Activated CD4-positive, alpha-beta memory T cell treated with anti-CD3 and anti-CD28 coated beads, Interleukin-2, amount 10 ng/mL, durations not matched to agents 7 days and 5 days (primary cell): ENCODE measurements at regions of chr12 and their contacts with region 1.

Region 1: GRCh38 chr12:69239352-69239921 is at the start of gene CPSF6:
- DNase-seq: peak; percentile 97
- H3K4me3 Mint-ChIP-seq: peak within 1 kb of the TSS; percentile 100
- H3K27ac Mint-ChIP-seq: peak within 1 kb of the TSS; percentile 98
- H3K4me1 Mint-ChIP-seq: peaks cover 45% of the 10 kb centered on the region
- H3K27me3 Mint-ChIP-seq: no peaks in the 10 kb centered on the region
- total RNA-seq, gene CPSF6: 89.9 to 91.6 TPM

Region 2: GRCh38 chr12:69083689-69084088 is 155.7 kb before region 1 on chr12:
- CTCF ChIA-PET with region 1: no interaction called
- POLR2A ChIA-PET with region 1: no interaction called
- DNase-seq: no peak
- H3K4me3 Mint-ChIP-seq: no peak overlapping the region
- H3K27ac Mint-ChIP-seq: no peak overlapping the region
- H3K4me1 Mint-ChIP-seq: no peaks in the 10 kb centered on the region
- H3K27me3 Mint-ChIP-seq: peaks cover 20% of the 10 kb centered on the region

Region 3: DNA sequence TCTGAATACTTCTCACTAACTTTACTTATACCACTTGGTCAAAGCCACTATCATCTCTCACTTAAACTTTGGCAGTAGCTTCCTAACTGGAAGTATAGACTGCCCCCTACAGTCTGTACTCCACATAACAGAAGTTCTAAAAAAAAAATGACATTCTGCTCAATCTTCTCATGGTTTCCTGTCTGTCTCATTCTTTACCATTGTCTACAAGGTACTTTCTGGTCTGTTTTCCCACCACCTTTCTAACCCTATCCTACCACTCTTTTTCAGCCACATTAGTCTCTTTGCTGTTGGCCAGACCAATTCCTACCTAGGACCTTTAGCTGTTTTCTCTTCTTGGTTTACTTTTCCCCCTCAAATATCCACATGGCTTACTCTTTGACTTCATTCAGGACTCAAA is 14.6 kb after region 1 on chr12:
- CTCF ChIA-PET with region 1: interaction called, 20 read pairs
- POLR2A ChIA-PET with region 1: interaction called, 5 read pairs
- DNase-seq: no peak
- H3K4me3 Mint-ChIP-seq: no peak overlapping the region
- H3K27ac Mint-ChIP-seq: peak overlapping the region; percentile 48
- H3K4me1 Mint-ChIP-seq: peaks cover 31% of the 10 kb centered on the region
- H3K27me3 Mint-ChIP-seq: no peaks in the 10 kb centered on the region